Activated CD4-positive, alpha-beta memory T cell treated with anti-CD3 and anti-CD28 coated beads for 36 hours (primary cell): ENCODE measurements at regions of chr21 and their contacts with region 1.

Region 1: GRCh38 chr21:38355992-38356797 is 99.4 kb downstream of the KCNJ15 start:
- DNase-seq: peak; percentile 82
- H3K4me3 Mint-ChIP-seq: no peak overlapping the region
- H3K27ac Mint-ChIP-seq: no peak overlapping the region
- H3K4me1 Mint-ChIP-seq: peaks cover 14% of the 10 kb centered on the region
- H3K27me3 Mint-ChIP-seq: peaks cover 11% of the 10 kb centered on the region

Region 2: GRCh38 chr21:37675202-37675801 is 680.9 kb before region 1 on chr21:
- CTCF ChIA-PET with region 1: interaction called, 3 read pairs
- POLR2A ChIA-PET with region 1: no interaction called
- intact Hi-C with region 1: loop called (anchors 10 kb)
- DNase-seq: peak; percentile 66
- H3K4me3 Mint-ChIP-seq: no peak overlapping the region
- H3K27ac Mint-ChIP-seq: no peak overlapping the region
- H3K4me1 Mint-ChIP-seq: no peaks in the 10 kb centered on the region
- H3K27me3 Mint-ChIP-seq: peaks cover 24% of the 10 kb centered on the region

Region 3: GRCh38 chr21:38012701-38013100 is 343.5 kb before region 1 on chr21:
- CTCF ChIA-PET with region 1: no interaction called
- POLR2A ChIA-PET with region 1: no interaction called
- intact Hi-C with region 1: no loop called
- DNase-seq: no peak
- H3K4me3 Mint-ChIP-seq: no peak overlapping the region
- H3K27ac Mint-ChIP-seq: no peak overlapping the region
- H3K4me1 Mint-ChIP-seq: no peaks in the 10 kb centered on the region
- H3K27me3 Mint-ChIP-seq: peaks cover 4% of the 10 kb centered on the region

Region 4: DNA sequence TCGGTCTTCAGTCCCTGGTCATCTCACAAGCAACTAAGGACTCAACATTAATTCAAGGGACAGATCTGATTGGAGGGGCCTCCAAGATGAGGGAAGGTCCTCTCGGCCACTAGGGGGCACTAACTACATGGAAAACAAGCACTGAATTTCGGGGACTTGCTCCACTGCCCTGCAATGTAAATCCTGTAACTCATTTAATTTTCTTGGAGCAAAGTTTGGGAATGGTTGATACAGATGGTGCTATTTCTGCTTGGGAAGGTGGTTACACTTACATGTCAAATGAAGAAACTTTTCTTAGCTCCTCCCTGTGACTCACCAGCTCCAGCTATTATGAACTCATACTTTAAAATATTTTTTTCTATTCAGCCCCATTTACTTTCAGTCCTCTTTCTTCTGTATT is 196.8 kb before region 1 on chr21:
- CTCF ChIA-PET with region 1: interaction called, 34 read pairs
- POLR2A ChIA-PET with region 1: no interaction called
- intact Hi-C with region 1: loop called (anchors 1 kb)
- DNase-seq: peak; percentile 65
- H3K4me3 Mint-ChIP-seq: no peak overlapping the region
- H3K27ac Mint-ChIP-seq: no peak overlapping the region
- H3K4me1 Mint-ChIP-seq: no peaks in the 10 kb centered on the region
- H3K27me3 Mint-ChIP-seq: peaks cover 3% of the 10 kb centered on the region

Region 5: GRCh38 chr21:38170280-38170679 is 185.9 kb before region 1 on chr21:
- CTCF ChIA-PET with region 1: interaction called, 23 read pairs
- POLR2A ChIA-PET with region 1: no interaction called
- intact Hi-C with region 1: no loop called
- DNase-seq: peak; percentile 12
- H3K4me3 Mint-ChIP-seq: no peak overlapping the region
- H3K27ac Mint-ChIP-seq: no peak overlapping the region
- H3K4me1 Mint-ChIP-seq: no peaks in the 10 kb centered on the region
- H3K27me3 Mint-ChIP-seq: no peaks in the 10 kb centered on the region

Region 6: GRCh38 chr21:38219049-38219628 is 137.1 kb before region 1 on chr21:
- CTCF ChIA-PET with region 1: interaction called, 148 read pairs
- POLR2A ChIA-PET with region 1: no interaction called
- intact Hi-C with region 1: loop called (anchors 1 kb)
- DNase-seq: peak; percentile 69
- H3K4me3 Mint-ChIP-seq: no peak overlapping the region
- H3K27ac Mint-ChIP-seq: no peak overlapping the region
- H3K4me1 Mint-ChIP-seq: peaks cover 6% of the 10 kb centered on the region
- H3K27me3 Mint-ChIP-seq: peaks cover 2% of the 10 kb centered on the region

Region 7: DNA sequence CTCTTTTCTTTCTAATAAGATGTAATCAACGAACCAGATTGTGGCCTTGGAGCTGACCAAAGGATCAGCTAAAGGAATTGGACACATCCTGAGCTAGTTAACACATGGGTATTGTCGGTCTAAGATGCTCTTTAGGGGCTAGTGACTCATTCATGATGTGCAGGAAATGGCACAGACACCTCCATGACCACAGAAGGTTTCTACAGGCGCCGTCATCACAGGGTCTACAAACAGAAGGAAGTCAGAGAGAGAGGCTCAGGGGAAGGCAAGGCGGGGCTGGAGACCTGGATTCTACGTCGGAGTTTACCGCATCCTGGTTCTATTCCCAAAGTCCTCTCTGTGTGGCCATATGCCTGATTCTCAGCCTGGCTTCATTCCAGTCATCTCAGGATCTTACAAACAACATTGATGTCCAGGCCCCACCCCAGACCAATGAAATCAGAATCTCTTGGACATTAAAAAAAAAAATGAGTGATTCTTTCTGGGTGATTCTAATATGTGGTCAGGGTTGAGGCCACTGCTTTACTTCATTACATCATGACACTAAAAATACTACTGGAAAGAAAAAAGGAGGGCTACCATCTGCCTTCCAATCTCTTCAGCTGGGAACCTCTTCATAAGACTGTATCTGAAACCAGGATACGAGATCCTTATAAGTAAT is 111.2 kb before region 1 on chr21:
- CTCF ChIA-PET with region 1: interaction called, 19 read pairs
- POLR2A ChIA-PET with region 1: no interaction called
- intact Hi-C with region 1: no loop called
- DNase-seq: peak; percentile 79
- H3K4me3 Mint-ChIP-seq: no peak overlapping the region
- H3K27ac Mint-ChIP-seq: peak overlapping the region; percentile 64
- H3K4me1 Mint-ChIP-seq: peaks cover 26% of the 10 kb centered on the region
- H3K27me3 Mint-ChIP-seq: peaks cover 14% of the 10 kb centered on the region

Region 8: GRCh38 chr21:38269576-38269936 is 86.6 kb before region 1 on chr21:
- CTCF ChIA-PET with region 1: interaction called, 12 read pairs
- POLR2A ChIA-PET with region 1: no interaction called
- intact Hi-C with region 1: no loop called
- DNase-seq: no peak
- H3K4me3 Mint-ChIP-seq: no peak overlapping the region
- H3K27ac Mint-ChIP-seq: no peak overlapping the region
- H3K4me1 Mint-ChIP-seq: peaks cover 27% of the 10 kb centered on the region
- H3K27me3 Mint-ChIP-seq: peaks cover 13% of the 10 kb centered on the region